ENCODE measurements at regions of chr11 and their contacts with region 1.

Region 1: DNA sequence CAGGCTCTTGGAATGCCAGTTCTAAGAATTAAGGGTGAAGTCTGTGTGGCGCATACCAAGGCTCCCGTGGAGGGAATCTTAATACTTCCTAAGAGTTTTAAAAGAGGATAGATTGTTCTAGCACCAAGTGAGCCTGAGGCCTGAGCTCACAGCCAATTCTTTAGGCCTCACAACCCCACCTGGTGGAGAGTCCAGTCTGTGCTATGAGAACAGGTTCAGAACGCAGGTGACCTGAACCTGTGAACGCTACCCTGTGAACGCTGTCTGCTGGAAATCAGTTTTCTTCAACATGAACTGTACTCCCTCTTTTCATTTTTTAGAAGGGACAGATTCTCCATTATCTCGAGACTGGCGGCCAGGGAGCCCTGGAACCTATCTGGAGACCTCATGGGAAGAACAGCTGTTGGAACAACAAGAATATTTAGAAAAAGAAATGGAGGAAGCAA is 43.2 kb upstream of the DLAT start:
- DNase-seq: peak; percentile 35 to 57 (median 38)
- H3K4me3 ChIP-seq: no peak overlapping the region
- H3K4me3 Mint-ChIP-seq: no peak overlapping the region
- H3K27ac ChIP-seq: no peak overlapping the region
- H3K27ac Mint-ChIP-seq: peak overlapping the region in 2 of 7 donors; percentile 19 to 25
- H3K4me1 ChIP-seq: peaks cover 7% of the 10 kb centered on the region
- H3K4me1 Mint-ChIP-seq: peaks cover 4 to 10% (median 8%) of the 10 kb centered on the region in 4 donors
- H3K27me3 ChIP-seq: no peaks in the 10 kb centered on the region
- H3K27me3 Mint-ChIP-seq: peaks cover 8 to 15% of the 10 kb centered on the region in 2 donors

Region 2: DNA sequence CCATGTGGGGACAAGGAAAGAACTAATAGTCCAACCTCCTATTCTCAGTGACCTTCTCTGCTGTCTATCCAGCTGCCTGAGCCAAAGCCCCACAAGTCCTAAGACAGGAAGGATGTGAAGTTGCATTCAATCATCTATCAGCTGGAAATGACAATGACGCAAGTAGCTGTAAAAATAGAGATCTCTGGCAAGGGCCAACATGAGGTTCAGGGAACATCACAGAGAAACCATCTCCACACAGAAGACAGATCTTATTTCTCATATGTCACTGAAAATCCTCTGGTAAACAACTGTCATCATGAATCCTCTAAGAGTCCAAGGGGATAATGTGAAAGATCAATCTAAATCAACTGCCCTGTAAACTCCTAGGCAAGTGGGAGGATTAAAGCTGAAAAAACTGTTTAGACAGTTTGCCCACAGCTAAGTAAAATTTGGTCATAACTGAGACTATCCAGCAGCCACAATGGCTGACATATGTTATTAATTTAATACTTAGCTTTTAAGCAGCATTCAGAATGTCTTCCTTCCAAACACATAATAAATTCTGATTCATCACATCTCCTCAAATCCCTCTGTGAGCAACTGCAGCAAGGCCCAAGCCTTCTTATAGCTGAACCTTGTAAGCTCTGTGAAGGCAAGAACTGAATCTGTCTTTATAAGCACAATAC is 162.7 kb before region 1 on chr11:
- CTCF ChIA-PET with region 1: no interaction called
- POLR2A ChIA-PET with region 1: no interaction called
- intact Hi-C with region 1: no loop called
- DNase-seq: no peak
- H3K4me3 ChIP-seq: no peak overlapping the region
- H3K4me3 Mint-ChIP-seq: no peak overlapping the region
- H3K27ac ChIP-seq: no peak overlapping the region
- H3K27ac Mint-ChIP-seq: peak overlapping the region in 1 of 7 donors; percentile 8
- H3K4me1 ChIP-seq: no peaks in the 10 kb centered on the region
- H3K4me1 Mint-ChIP-seq: peaks cover 0 to 8% (median 2%) of the 10 kb centered on the region in 4 donors
- H3K27me3 ChIP-seq: no peaks in the 10 kb centered on the region
- H3K27me3 Mint-ChIP-seq: no peaks in the 10 kb centered on the region

Region 3: GRCh38 chr11:111911563-111912401 is 70.3 kb before region 1 on chr11 and contains the start of gene CRYAB:
- CTCF ChIA-PET with region 1: no interaction called
- POLR2A ChIA-PET with region 1: no interaction called
- intact Hi-C with region 1: no loop called
- DNase-seq: no peak
- H3K4me3 ChIP-seq: no peak within 1 kb of the TSS
- H3K4me3 Mint-ChIP-seq: peak within 1 kb of the TSS in 1 of 8 donors; percentile 60
- H3K27ac ChIP-seq: no peak within 1 kb of the TSS
- H3K27ac Mint-ChIP-seq: peak within 1 kb of the TSS in 2 of 7 donors; percentile 23 to 31
- H3K4me1 ChIP-seq: no peaks in the 10 kb centered on the region
- H3K4me1 Mint-ChIP-seq: peaks cover 0 to 4% (median 0%) of the 10 kb centered on the region in 4 donors
- H3K27me3 ChIP-seq: peaks cover 5% of the 10 kb centered on the region
- H3K27me3 Mint-ChIP-seq: peaks cover 35 to 41% of the 10 kb centered on the region in 2 donors
- total RNA-seq, gene CRYAB: not detected

Region 4: DNA sequence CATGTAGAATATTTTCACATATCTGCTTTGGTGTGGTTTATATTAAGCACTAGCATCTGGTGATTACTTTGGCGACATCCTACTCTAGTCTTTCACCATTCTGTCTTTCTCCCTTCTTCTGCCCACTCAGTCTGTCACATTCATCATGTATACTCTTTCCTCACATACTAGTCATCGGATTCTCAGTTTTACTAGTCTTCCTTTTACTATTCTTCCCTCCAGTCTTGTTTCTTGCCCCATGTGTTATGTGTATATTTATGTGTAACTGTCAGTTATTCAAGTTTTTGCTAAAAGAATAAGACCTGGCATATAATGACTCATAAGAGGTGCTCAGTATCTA is 49.5 kb before region 1 on chr11:
- CTCF ChIA-PET with region 1: interaction called, 119 read pairs
- POLR2A ChIA-PET with region 1: interaction called, 3 read pairs
- intact Hi-C with region 1: loop called (anchors 1 kb)
- DNase-seq: no peak
- H3K4me3 ChIP-seq: no peak overlapping the region
- H3K4me3 Mint-ChIP-seq: peak overlapping the region in 5 of 8 donors; percentile 1 to 46 (median 32)
- H3K27ac ChIP-seq: no peak overlapping the region
- H3K27ac Mint-ChIP-seq: peak overlapping the region in 1 of 7 donors; percentile 38
- H3K4me1 ChIP-seq: peaks cover 25% of the 10 kb centered on the region
- H3K4me1 Mint-ChIP-seq: peaks cover 10 to 26% (median 14%) of the 10 kb centered on the region in 4 donors
- H3K27me3 ChIP-seq: no peaks in the 10 kb centered on the region
- H3K27me3 Mint-ChIP-seq: peaks cover 3 to 4% of the 10 kb centered on the region in 2 donors

Region 5: GRCh38 chr11:111938687-111939160 is 43.3 kb before region 1 on chr11:
- CTCF ChIA-PET with region 1: interaction called, 119 read pairs
- POLR2A ChIA-PET with region 1: interaction called, 3 read pairs
- intact Hi-C with region 1: no loop called
- DNase-seq: peak; percentile 7 to 55 (median 19)
- H3K4me3 ChIP-seq: no peak overlapping the region
- H3K4me3 Mint-ChIP-seq: peak overlapping the region; percentile 47 to 85 (median 70)
- H3K27ac ChIP-seq: no peak overlapping the region
- H3K27ac Mint-ChIP-seq: peak overlapping the region; percentile 36 to 94 (median 75)
- H3K4me1 ChIP-seq: peaks cover 31% of the 10 kb centered on the region
- H3K4me1 Mint-ChIP-seq: peaks cover 18 to 37% (median 26%) of the 10 kb centered on the region in 4 donors
- H3K27me3 ChIP-seq: no peaks in the 10 kb centered on the region
- H3K27me3 Mint-ChIP-seq: no peaks in the 10 kb centered on the region

Region 6: GRCh38 chr11:112024773-112025678 is 43.0 kb after region 1 on chr11 and contains the start of gene DLAT:
- CTCF ChIA-PET with region 1: no interaction called
- POLR2A ChIA-PET with region 1: no interaction called
- intact Hi-C with region 1: no loop called
- DNase-seq: peak; percentile 85 to 89 (median 86)
- H3K4me3 ChIP-seq: peak within 1 kb of the TSS; percentile 99 to 100
- H3K4me3 Mint-ChIP-seq: peak within 1 kb of the TSS; percentile 97 to 100 (median 100)
- H3K27ac ChIP-seq: peak within 1 kb of the TSS; percentile 78
- H3K27ac Mint-ChIP-seq: peak within 1 kb of the TSS; percentile 92 to 100 (median 99)
- H3K4me1 ChIP-seq: peaks cover 15% of the 10 kb centered on the region
- H3K4me1 Mint-ChIP-seq: peaks cover 13 to 41% (median 27%) of the 10 kb centered on the region in 4 donors
- H3K27me3 ChIP-seq: no peaks in the 10 kb centered on the region
- H3K27me3 Mint-ChIP-seq: no peaks in the 10 kb centered on the region
- total RNA-seq, gene DLAT: 19.4 to 21.6 TPM